Activated B cell treated with CpG ODN at 0.5 μM for 24 hours (primary cell): ENCODE measurements at regions of chr5 and their contacts with region 1.

Region 1: GRCh38 chr5:109479260-109479860 is 69.6 kb upstream of the PJA2 start:
- DNase-seq: no peak
- ATAC-seq: no peak
- H3K4me3 Mint-ChIP-seq: no peak overlapping the region
- H3K27ac Mint-ChIP-seq: no peak overlapping the region
- H3K4me1 Mint-ChIP-seq: peaks cover 7% of the 10 kb centered on the region
- H3K27me3 Mint-ChIP-seq: peaks cover 6% of the 10 kb centered on the region
- CTCF ChIP-seq: no peak

Region 2: DNA sequence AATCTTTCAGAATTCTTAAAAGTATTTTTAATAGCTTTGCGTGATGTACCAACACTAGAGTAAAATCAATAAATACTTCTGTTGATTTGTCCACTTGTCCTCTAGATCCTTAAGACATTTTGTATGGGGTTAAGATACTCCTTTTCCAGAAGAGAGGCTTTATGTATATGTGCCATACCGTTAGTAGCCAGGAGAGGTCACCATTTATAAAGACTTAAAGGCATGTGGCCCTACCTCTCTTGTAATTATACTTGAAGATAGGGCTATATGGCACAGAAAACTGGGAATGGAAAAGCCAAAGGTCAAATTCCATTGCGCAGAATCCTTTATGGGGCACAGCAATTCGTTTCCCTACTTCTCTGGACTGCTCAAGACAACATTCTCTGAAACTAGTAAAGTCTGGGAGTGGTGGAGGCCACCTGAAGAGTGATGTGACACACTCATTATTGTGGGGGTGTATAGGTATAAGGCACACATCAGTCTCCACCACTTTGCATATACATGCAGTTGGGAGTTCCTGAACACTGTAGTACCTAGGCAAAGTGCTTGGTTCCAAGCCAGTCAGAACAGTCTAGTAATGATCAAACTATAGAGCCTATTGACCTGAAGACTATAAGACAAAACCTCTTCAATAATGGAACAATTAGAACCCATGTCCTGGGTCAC is 957.4 kb before region 1 on chr5:
- CTCF ChIA-PET with region 1: no interaction called
- POLR2A ChIA-PET with region 1: no interaction called
- intact Hi-C with region 1: loop called (anchors 5 kb)
- DNase-seq: no peak
- ATAC-seq: peak; percentile 49
- H3K4me3 Mint-ChIP-seq: no peak overlapping the region
- H3K27ac Mint-ChIP-seq: no peak overlapping the region
- H3K4me1 Mint-ChIP-seq: peaks cover 31% of the 10 kb centered on the region
- H3K27me3 Mint-ChIP-seq: peaks cover 4% of the 10 kb centered on the region
- CTCF ChIP-seq: no peak

Region 3: DNA sequence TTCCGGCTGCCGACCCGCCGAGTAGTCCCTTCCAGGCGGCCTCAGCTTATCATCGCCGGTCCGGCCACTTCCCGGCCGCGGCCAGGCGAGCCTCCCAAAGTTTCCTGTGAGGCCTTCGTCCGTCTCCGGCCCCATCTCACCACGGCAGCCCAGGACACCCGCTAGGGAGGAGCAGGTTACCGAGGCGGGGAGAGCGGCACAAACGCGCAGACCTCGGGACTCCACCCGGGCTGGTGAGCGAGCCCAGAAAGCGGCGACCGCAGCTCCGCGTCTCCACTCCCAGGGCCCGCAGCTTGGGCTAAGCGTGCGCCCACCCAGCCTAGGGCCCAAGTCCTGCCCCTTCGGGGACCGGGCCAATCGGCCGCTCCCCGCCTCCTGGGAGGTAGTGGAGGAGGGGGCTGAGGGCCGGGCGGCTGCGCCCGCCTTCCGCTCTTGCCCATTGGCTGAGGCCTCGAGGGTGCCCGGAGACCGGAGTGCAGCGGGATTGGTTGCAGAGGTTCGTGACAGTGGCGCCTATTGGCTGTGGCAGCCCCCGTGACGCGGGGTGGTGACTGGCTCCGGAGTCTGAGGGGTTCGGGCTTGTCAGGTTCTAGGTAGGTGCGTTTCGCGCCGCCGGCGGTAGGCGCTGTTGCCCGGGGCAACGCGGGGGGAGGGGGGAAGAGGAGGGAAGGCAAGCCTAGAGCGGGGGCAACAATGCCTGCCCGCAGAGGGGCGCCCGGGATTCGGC is 730.8 kb before region 1 on chr5:
- CTCF ChIA-PET with region 1: no interaction called
- POLR2A ChIA-PET with region 1: no interaction called
- intact Hi-C with region 1: no loop called
- DNase-seq: peak; percentile 92
- ATAC-seq: peak; percentile 92
- H3K4me3 Mint-ChIP-seq: peak overlapping the region; percentile 92
- H3K27ac Mint-ChIP-seq: peak overlapping the region; percentile 94
- H3K4me1 Mint-ChIP-seq: peaks cover 22% of the 10 kb centered on the region
- H3K27me3 Mint-ChIP-seq: no peaks in the 10 kb centered on the region
- CTCF ChIP-seq: no peak

Region 4: DNA sequence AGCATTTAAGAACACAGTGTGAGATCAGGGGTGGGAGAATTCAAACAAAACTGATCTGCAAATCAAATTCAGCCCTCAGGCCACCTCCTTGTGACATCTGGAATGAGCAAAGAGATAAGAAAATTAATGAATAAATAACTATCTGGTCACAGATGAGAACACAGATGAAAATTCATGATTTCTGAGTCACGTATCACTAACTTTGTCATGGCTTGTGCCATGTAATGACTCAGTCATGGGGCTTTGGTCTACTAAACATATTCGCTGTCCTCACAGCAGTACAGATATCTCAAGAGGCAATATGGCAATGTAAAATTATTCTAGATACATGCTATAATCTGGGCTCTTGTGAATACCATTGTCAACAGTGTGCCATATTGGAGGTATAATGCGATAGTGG is 484.8 kb after region 1 on chr5:
- CTCF ChIA-PET with region 1: no interaction called
- POLR2A ChIA-PET with region 1: no interaction called
- intact Hi-C with region 1: no loop called
- DNase-seq: no peak
- ATAC-seq: no peak
- H3K4me3 Mint-ChIP-seq: no peak overlapping the region
- H3K27ac Mint-ChIP-seq: no peak overlapping the region
- H3K4me1 Mint-ChIP-seq: no peaks in the 10 kb centered on the region
- H3K27me3 Mint-ChIP-seq: no peaks in the 10 kb centered on the region
- CTCF ChIP-seq: no peak